HEK293 (cell line): ENCODE measurements at regions of chr3 and their contacts with region 1.

Region 1: DNA sequence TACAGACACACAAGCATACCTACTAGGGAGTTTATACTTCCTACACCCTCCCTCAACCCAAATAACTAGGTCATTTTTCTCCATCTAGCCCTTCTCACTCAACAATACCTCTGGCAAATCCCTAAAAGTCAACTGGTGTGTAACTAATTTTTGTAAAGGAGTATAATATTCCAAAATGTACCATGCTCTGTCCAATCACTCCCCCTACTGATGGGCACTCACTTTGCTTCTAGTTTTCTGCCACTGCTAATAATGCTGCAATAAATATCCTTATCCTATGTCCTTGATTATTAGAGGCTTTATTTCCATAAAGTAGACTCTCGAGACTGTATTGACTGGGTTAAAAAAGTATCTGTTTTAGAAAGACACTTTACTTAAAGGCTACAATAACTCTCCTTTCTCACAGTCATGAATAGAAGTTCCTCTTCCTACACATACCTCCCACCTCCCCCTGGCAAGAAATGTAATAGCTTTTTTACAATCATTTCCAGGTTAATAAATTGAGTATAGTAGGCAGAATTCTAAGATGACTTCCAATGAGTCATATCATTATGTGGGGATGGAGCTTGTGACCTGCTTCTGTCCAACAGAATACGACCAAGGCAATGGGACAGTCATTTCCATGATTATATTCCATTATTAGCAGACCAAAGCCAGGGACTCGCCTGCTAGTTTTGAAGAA is 30.0 kb downstream of the SHQ1 start:
- H3K4me3 ChIP-seq: no peak overlapping the region
- H3K27ac ChIP-seq: no peak overlapping the region
- H3K4me1 ChIP-seq: peaks cover 10% of the 10 kb centered on the region; the same call in 1 of the 2 replicates
- CTCF ChIP-seq: peak; percentile 29; the same call in 1 of the 2 replicates

Region 2: DNA sequence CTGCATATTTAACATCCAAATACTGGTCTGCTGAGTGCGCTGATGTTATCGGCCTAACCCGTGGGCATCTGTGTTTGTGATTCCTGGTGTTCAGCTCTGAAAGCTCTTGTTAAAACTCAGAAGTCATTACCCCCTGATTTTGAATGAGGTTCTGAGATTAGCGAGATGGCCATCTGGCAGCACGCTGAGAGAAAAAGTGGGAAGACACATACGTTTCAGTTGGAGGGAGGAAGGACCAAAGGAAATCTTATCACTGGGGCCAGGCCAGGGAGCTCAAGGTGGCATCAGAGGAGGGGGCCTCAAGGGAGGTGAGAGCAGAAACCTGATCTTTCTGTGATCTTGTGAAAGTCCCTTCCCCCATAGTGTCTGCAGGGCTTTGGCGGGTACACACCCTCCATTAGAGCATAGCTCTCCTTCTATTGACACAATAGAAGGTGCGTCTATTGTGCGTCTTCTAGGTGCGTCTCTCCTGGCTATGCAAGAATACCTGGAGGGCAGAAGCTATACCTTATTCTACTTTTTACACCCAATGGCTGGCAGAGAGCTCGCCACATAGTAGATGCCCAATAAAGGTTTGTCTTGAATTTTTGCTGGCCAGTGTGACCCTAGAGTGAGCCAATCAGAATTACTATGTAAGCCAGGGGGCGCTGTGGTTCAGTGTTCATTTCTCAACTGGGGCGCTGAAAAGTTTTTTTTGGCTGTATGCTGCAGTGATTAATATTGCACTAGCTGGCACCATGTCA is 152.4 kb before region 1 on chr3:
- CTCF ChIA-PET with region 1: interaction called, 17 read pairs
- POLR2A ChIA-PET with region 1: no interaction called
- H3K4me3 ChIP-seq: no peak overlapping the region
- H3K27ac ChIP-seq: no peak overlapping the region
- H3K4me1 ChIP-seq: no peaks in the 10 kb centered on the region
- CTCF ChIP-seq: no peak

Region 3: DNA sequence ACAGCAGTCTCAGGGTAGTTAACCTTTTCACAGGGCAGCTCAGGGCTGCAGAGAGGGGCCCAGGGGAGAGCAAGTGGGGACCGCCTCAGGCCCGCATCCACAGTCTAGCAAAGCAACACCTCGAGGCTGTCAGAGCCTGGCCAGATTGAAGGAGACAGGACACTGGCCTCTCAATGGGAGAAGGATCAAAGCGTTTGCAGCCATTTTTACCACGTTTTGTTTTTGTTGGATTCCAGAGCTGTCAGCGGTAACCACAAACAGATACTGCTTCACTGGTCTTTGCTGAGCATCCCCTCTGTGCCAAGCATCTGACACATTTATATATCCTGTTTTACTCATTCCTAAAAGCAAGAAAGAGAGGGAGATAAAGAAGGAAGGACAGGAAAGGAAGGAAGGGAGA is 123.8 kb before region 1 on chr3:
- CTCF ChIA-PET with region 1: no interaction called
- POLR2A ChIA-PET with region 1: no interaction called
- H3K4me3 ChIP-seq: no peak overlapping the region
- H3K27ac ChIP-seq: no peak overlapping the region
- H3K4me1 ChIP-seq: no peaks in the 10 kb centered on the region
- CTCF ChIP-seq: no peak

Region 4: GRCh38 chr3:72830452-72831217 is 12.4 kb after region 1 on chr3:
- CTCF ChIA-PET with region 1: interaction called, 10 read pairs
- POLR2A ChIA-PET with region 1: no interaction called
- H3K4me3 ChIP-seq: no peak overlapping the region
- H3K27ac ChIP-seq: no peak overlapping the region
- H3K4me1 ChIP-seq: no peaks in the 10 kb centered on the region
- CTCF ChIP-seq: no peak